SK-N-SH (cell line): ENCODE measurements at regions of chr11 and their contacts with region 1.

Region 1: DNA sequence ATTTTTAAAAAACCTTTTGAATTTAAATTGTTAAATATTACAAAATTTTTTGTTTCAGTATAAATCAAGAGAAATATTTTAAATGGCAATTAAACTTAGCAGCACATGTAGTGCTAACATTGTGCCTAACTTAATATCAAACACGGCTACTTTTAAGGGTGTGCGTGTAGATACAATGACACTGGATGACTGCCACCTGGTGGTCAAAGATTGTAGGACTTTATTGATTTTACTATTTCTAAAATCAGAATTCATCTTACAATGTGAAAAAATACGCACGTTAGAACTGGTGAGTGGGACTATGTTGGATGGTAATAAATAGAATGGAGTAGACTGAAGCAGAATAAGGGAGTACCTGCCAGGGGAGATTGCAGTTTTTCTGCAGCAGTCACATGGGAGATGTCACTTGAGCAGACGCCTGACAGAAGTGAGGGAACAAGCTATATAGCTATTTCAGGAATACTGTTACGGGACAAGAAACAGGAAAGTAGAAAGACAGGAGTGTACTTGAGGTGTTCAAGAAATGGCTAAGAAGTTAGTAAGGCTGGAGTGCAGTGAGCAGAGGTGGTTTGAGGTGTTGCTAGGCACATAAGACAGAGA is 52.9 kb downstream of the UVRAG start:
- DNase-seq: peak; percentile 59
- H3K4me3 ChIP-seq: no peak overlapping the region; a peak in 1 of 4 replicates
- H3K27ac ChIP-seq: no peak overlapping the region
- H3K4me1 ChIP-seq: peaks cover 0 to 3% of the 10 kb centered on the region in 2 experiments; a peak in 2 of 4 replicates
- H3K27me3 ChIP-seq: no peaks in the 10 kb centered on the region
- CTCF ChIP-seq: peak; percentile 83
- EP300 ChIP-seq: no peak
- RAD21 ChIP-seq: peak; percentile 79

Region 2: DNA sequence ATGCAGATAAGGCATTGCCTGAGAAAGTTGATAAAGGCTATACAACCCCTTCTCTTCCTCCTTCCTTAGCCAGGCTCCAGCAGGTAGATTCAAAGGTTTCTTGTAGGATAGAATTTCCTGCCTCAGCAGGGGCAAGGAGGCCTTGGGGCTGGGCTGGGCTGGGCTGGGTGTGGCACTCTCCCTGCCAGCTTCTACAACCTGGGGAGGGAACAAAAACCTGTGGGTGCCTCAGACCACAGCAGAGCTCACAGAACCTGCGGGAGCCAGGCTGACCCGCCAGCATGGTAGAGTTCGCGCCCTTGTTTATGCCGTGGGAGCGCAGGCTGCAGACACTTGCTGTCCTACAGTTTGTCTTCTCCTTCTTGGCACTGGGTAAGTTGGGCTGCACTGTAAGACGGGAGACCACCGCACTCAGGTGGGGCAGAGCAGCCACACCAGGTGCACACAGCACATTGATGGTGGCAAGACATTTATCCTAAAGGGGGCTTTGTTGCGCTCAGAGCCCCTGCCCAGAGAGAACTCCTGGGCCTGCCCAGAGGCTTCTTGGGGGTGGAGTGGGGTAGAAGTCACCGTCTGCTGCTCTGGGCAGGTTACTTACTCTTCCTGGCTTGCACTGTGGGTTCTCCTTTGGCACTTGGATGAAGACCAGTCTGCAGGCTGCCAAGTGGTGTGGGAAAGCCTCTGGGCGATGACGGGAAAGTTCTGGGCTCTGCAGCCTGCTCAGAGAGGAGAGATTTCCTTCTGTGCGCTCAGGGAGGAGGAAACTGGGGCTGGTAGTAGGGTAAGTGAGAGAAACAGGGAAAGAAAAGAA is 150.1 kb before region 1 on chr11 and contains the start of gene MOGAT2:
- CTCF ChIA-PET with region 1: interaction called, 12 read pairs
- POLR2A ChIA-PET with region 1: no interaction called
- DNase-seq: no peak
- H3K4me3 ChIP-seq: no peak within 1 kb of the TSS
- H3K27ac ChIP-seq: no peak within 1 kb of the TSS
- H3K4me1 ChIP-seq: peaks cover 0 to 15% of the 10 kb centered on the region in 2 experiments; a peak in 2 of 4 replicates
- H3K27me3 ChIP-seq: no peaks in the 10 kb centered on the region; the same call in 1 of the 2 replicates
- CTCF ChIP-seq: no peak
- EP300 ChIP-seq: no peak
- RAD21 ChIP-seq: no peak
- polyA plus RNA-seq, gene MOGAT2: 0.03 TPM in 1 of 2 replicates, not detected in the other

Region 3: DNA sequence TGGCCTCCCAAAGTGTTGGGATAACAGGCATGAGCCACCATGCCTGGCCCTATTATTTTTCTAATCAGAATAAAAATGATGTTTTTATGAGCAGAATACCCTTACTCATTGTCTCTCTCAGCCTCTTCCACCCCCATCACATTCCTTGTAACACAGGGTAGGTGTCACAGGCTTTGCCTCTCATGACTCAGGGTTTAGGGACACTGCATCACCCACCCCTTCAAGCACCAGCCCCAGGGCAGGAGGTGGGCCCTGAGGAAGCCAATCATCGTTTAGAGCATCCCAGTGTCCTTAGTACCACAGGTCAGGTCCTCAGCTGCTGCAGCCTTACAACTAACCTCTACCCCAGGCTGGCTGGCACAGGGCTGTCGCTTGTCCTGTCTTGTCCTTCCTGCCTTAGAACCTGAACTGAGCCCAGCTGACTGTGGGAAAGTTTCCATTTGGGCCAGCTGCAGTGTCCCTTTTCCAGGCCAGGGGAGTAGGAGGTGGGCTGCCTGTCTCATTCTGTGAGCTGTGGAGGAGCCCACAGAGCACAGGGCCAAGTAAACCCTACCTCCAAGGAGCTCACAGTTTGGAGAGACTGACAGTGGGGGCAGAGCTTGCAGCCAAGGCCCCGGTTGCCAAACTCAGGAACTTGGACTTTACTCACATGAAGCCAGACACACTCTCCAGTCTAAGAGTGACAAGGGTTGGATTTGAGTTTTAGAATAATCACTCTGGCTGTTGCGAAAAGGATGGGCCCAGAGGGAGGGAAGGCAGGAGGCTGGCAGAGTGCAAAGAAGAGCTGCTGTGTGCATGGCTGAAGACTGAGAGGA is 72.4 kb before region 1 on chr11:
- CTCF ChIA-PET with region 1: interaction called, 115 read pairs
- POLR2A ChIA-PET with region 1: no interaction called
- DNase-seq: no peak
- H3K4me3 ChIP-seq: no peak overlapping the region
- H3K27ac ChIP-seq: no peak overlapping the region
- H3K4me1 ChIP-seq: peaks cover 0 to 15% of the 10 kb centered on the region in 2 experiments; a peak in 1 of 4 replicates
- H3K27me3 ChIP-seq: no peaks in the 10 kb centered on the region; the same call in 1 of the 2 replicates
- CTCF ChIP-seq: no peak
- EP300 ChIP-seq: no peak
- RAD21 ChIP-seq: no peak

Region 4: DNA sequence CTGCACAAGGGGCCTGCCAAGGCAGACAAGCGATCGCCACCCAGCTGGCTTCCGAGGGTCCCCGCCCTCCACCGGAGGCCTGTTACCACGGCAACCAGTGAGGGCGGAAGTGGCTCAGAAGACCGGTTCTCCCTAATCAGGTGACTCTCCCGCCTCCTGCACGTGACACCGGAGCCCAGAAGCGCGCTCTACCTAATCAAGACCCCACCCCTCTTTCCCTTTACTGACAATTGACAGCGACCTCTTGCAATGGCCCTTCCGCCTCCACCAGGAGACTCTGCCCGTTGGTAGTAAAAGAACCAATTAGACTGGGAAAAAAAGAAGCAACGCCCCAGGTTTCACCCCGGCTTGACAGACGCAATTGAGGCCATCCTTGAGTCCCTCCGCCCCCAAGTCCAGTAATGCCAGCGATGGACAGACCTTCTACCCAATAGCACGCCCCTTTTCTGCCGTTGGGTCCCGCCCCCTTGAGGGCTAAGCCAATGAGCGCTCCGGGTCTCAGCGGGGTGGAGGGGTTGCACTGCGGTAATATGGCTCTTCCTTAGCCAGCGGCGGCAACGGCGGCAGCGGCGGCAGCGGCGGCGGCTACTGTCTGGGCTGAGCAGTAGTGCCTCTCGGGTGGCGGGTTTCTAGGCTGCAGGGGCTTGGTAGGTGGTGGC is 53.1 kb before region 1 on chr11 and contains the start of gene UVRAG:
- CTCF ChIA-PET with region 1: interaction called, 18 read pairs
- POLR2A ChIA-PET with region 1: no interaction called
- DNase-seq: peak; percentile 97
- H3K4me3 ChIP-seq: peak within 1 kb of the TSS; percentile 87 to 95
- H3K27ac ChIP-seq: peak within 1 kb of the TSS; percentile 70 to 88
- H3K4me1 ChIP-seq: peaks cover 9 to 13% of the 10 kb centered on the region in 2 experiments; a peak in 2 of 4 replicates
- H3K27me3 ChIP-seq: no peaks in the 10 kb centered on the region
- CTCF ChIP-seq: no peak
- EP300 ChIP-seq: no peak
- RAD21 ChIP-seq: no peak
- polyA plus RNA-seq, gene UVRAG: 5.8 and 7.7 TPM in 2 replicates

Region 5: GRCh38 chr11:75850787-75851186 is 17.1 kb before region 1 on chr11:
- CTCF ChIA-PET with region 1: interaction called, 30 read pairs
- POLR2A ChIA-PET with region 1: no interaction called
- DNase-seq: no peak
- H3K4me3 ChIP-seq: no peak overlapping the region
- H3K27ac ChIP-seq: peak overlapping the region in 1 of 2 experiments; percentile 52; a peak in 2 of 4 replicates
- H3K4me1 ChIP-seq: peaks cover 5 to 20% of the 10 kb centered on the region in 2 experiments
- H3K27me3 ChIP-seq: no peaks in the 10 kb centered on the region
- CTCF ChIP-seq: no peak
- EP300 ChIP-seq: no peak
- RAD21 ChIP-seq: no peak

Region 6: DNA sequence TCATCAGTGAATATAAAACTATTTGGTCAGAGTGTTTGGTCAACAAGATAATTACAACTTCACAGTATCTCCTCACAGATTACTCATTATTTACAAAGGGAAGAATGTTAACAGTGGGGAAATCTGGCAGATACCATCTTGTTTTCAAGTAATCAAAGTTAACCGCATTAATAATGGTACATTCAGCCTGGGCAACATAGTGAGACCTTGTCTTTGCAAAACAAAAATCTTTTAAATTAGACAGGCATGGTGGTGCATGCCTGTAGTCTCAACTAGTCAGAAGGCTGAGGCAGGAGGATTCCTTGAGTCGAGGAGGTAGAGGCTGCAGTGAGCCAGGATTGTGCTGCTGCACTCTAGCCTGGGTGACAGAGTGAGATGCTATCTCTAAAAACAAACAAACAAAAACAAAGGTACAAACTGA is 1071.3 kb after region 1 on chr11:
- CTCF ChIA-PET with region 1: no interaction called
- POLR2A ChIA-PET with region 1: no interaction called
- DNase-seq: no peak
- H3K4me3 ChIP-seq: no peak overlapping the region
- H3K27ac ChIP-seq: no peak overlapping the region
- H3K4me1 ChIP-seq: no peaks in the 10 kb centered on the region
- H3K27me3 ChIP-seq: no peaks in the 10 kb centered on the region
- CTCF ChIP-seq: no peak
- EP300 ChIP-seq: no peak
- RAD21 ChIP-seq: no peak